Endothelial cell of umbilical vein (primary cell): ENCODE measurements at regions of chr4 and their contacts with region 1.

Region 1: DNA sequence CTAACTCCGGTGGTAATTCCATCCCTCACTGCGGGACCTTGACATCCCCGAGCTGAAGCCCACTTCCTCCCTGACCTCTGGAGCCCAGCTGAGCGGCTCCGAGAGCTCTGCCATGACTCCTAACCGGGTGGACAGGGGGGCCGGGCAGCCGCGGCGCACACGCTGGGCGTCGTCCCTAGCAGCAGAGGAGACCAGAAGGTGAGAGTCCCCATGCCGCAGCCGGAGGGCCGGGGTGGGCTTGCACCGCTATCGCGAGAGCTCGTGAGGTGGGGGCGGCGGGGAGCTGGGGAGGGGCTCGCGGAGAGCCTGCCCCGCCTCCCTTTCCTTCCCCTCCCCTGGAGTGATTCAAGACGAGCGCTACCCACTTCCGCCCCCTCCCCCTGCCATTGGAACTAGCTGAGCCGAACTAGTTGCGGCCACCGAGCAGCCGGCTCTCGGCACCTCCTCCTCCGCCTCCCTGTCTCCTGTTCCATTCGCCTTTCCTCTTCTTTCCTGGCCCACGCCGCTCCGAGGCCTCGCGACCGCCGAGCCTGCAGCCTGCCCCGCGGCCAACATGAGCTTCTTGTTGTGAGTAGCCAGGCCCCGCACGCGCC is at the start of gene MOB1B:
- DNase-seq: peak; percentile 88
- H3K4me3 ChIP-seq: peak within 1 kb of the TSS; percentile 64 to 99 (median 96)
- H3K27ac ChIP-seq: peak within 1 kb of the TSS; percentile 71
- H3K4me1 ChIP-seq: peaks cover 14% of the 10 kb centered on the region
- H3K27me3 ChIP-seq: no peaks in the 10 kb centered on the region
- CTCF ChIP-seq: peak in 1 of 2 donors; percentile 24
- POLR2A ChIP-seq: peak; percentile 83
- total RNA-seq, gene MOB1B: 23.9 and 25.9 TPM in 2 replicates

Region 2: GRCh38 chr4:70839589-70840093 is 62.4 kb before region 1 on chr4 and contains the start of gene GRSF1:
- CTCF ChIA-PET with region 1: no interaction called
- POLR2A ChIA-PET with region 1: interaction called, 5 read pairs
- dilution Hi-C with region 1: no loop called
- intact Hi-C with region 1: loop called (anchors 1 kb)
- DNase-seq: peak; percentile 91
- H3K4me3 ChIP-seq: peak within 1 kb of the TSS; percentile 54 to 81 (median 80)
- H3K27ac ChIP-seq: peak within 1 kb of the TSS; percentile 60
- H3K4me1 ChIP-seq: peaks cover 2% of the 10 kb centered on the region
- H3K27me3 ChIP-seq: no peaks in the 10 kb centered on the region
- CTCF ChIP-seq: no peak
- POLR2A ChIP-seq: peak; percentile 87
- total RNA-seq, gene GRSF1: 70.7 and 71.6 TPM in 2 replicates